Activated CD4-positive, alpha-beta memory T cell treated with anti-CD3 and anti-CD28 coated beads for 36 hours (primary cell): ENCODE measurements at regions of chr18 and their contacts with region 1.

Region 1: DNA sequence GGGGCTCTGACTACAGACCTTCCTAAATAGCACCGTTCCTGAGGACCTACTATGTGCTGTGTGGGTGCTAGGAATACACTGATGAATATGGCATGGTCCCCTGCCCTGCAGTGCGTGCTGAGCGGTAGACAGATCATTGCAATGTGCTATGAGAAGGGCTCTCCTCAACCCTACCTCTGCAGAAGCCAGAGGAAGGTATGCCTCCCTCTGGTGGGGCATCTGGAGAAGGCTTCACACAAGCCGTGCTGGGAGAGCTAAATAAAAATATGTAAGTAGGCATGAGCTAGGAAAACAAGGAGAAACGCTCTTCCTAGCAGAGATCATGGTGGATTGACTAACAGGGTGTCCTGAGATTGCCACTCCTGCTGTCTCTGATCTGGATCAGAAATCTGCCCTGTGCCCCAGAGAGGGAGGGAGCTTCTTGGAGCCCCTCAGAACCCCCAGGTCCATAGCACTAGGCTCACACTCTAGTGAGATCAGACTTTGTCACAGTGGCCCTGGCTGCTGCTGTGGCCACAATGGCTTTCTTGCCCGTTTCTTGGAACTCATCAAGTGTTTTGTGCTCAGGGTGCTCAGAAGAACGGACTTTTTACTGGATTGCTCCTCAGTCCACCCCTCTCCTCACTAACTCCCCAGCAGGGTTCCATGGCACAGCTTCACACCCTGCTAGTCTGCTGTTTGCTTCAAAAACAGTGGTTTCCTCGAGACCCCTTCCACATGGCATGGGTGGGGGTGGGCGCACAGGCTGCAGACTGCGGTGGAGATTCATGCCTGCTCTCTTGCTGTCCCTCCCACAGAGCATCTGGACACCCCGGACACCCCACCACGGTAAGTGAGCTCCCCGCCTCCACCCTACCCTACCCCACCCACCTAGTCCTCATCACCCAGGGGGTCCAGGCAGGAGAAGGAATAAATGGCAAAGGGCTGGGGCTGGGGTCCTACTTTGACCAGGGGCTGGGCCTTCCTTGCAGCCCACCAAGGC is 14.2 kb downstream of the SIGLEC15 start:
- DNase-seq: peak; percentile 48
- H3K4me3 Mint-ChIP-seq: no peak overlapping the region
- H3K27ac Mint-ChIP-seq: no peak overlapping the region
- H3K4me1 Mint-ChIP-seq: peaks cover 7% of the 10 kb centered on the region
- H3K27me3 Mint-ChIP-seq: peaks cover 29% of the 10 kb centered on the region

Region 2: DNA sequence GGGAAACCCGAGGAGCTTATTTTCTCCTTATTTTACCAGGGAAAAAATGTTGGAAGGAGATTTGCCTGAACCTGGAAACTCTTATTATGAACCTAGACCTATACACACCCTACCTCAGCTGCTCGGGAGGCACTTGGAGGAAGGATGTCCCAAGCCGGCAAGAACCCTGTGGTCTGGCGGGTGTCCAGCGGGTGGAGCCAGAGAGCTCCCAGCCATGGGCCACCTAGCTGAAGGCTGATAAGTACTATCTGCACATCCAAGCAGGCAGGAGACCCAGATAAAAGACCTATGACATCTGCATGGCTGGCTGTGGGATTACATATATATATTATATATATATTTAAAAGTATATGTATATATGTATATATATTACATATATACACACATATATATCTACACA is 116.8 kb before region 1 on chr18:
- CTCF ChIA-PET with region 1: interaction called, 7 read pairs
- POLR2A ChIA-PET with region 1: no interaction called
- intact Hi-C with region 1: loop called (anchors 5 kb)
- DNase-seq: peak; percentile 85
- H3K4me3 Mint-ChIP-seq: no peak overlapping the region
- H3K27ac Mint-ChIP-seq: no peak overlapping the region
- H3K4me1 Mint-ChIP-seq: no peaks in the 10 kb centered on the region
- H3K27me3 Mint-ChIP-seq: no peaks in the 10 kb centered on the region

Region 3: DNA sequence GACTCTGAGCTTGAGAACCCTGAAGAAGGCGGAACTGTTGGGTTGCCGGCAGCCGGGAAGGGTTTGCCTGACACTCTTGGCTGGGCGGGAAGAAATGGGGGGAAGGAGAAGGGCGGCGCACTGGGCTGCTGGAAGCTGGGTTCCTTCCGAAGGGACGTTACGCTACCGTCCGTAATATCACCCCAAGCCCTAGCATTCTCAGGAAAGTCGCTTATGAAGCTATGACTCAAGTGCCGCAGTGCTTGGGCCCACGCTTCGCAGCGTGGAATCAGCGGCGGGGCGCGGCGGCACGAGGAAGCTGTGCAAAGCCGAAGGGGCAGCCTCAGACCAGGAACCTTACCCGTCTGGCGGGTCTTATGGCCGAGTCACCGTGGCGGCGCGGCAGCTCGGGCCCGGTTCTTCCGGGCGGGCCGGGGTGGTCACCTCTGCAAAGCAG is 64.4 kb before region 1 on chr18:
- CTCF ChIA-PET with region 1: no interaction called
- POLR2A ChIA-PET with region 1: no interaction called
- intact Hi-C with region 1: loop called (anchors 5 kb)
- DNase-seq: peak; percentile 82
- H3K4me3 Mint-ChIP-seq: peak overlapping the region; percentile 77
- H3K27ac Mint-ChIP-seq: no peak overlapping the region
- H3K4me1 Mint-ChIP-seq: peaks cover 18% of the 10 kb centered on the region
- H3K27me3 Mint-ChIP-seq: peaks cover 5% of the 10 kb centered on the region